SK-N-SH (cell line): ENCODE measurements at regions of chr2 and their contacts with region 1.

Region 1: GRCh38 chr2:230160112-230160660 is 59.6 kb downstream of the SP110 start:
- DNase-seq: peak; percentile 71
- H3K4me3 ChIP-seq: no peak overlapping the region
- H3K27ac ChIP-seq: no peak overlapping the region
- H3K4me1 ChIP-seq: peaks cover 0 to 3% of the 10 kb centered on the region in 2 experiments; a peak in 1 of 4 replicates
- H3K27me3 ChIP-seq: no peaks in the 10 kb centered on the region
- CTCF ChIP-seq: peak; percentile 83
- EP300 ChIP-seq: no peak
- RAD21 ChIP-seq: peak; percentile 72

Region 2: GRCh38 chr2:230007931-230008707 is 152.1 kb before region 1 on chr2:
- CTCF ChIA-PET with region 1: interaction called, 36 read pairs
- POLR2A ChIA-PET with region 1: no interaction called
- DNase-seq: peak; percentile 49
- H3K4me3 ChIP-seq: no peak overlapping the region; a peak in 1 of 4 replicates
- H3K27ac ChIP-seq: no peak overlapping the region
- H3K4me1 ChIP-seq: no peaks in the 10 kb centered on the region
- H3K27me3 ChIP-seq: no peaks in the 10 kb centered on the region
- CTCF ChIP-seq: peak; percentile 94
- EP300 ChIP-seq: no peak
- RAD21 ChIP-seq: peak; percentile 80

Region 3: DNA sequence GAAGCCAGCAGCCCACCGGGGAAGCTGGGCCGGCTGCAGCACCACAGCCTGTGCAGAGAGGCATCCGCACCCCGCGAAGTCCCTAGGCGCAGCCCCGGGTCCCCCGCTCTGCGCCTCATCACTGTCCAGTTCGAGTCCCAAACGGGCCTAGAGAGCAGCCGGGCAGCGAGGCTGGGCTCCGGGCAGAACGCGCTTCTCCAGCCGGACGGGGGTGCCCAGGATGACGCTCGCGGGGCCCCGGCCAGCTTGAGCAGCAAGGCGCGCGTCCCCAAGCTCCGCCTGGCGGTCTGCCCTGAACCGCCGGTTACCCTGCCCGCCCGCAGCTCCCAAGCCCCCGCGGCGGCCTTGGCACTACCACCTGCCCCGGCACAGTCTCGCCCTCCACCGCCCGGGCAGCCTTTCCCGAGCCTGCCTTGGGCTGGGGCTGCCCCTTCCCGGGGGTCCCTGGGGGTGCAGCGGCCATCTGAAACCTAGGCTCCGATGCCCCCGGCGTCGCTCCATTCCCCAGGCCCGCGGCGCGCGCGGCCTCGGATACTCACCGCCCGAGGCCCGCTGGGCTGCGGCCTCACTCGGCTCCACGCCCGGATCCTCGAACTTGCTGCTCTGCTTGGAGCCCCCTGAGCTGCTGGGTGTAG is 92.1 kb before region 1 on chr2:
- CTCF ChIA-PET with region 1: interaction called, 16 read pairs
- POLR2A ChIA-PET with region 1: no interaction called
- DNase-seq: peak; percentile 82
- H3K4me3 ChIP-seq: peak overlapping the region; percentile 56 to 66
- H3K27ac ChIP-seq: no peak overlapping the region; a peak in 1 of 4 replicates
- H3K4me1 ChIP-seq: no peaks in the 10 kb centered on the region; a peak in 1 of 4 replicates
- H3K27me3 ChIP-seq: no peaks in the 10 kb centered on the region
- CTCF ChIP-seq: peak; percentile 21
- EP300 ChIP-seq: no peak
- RAD21 ChIP-seq: no peak

Region 4: GRCh38 chr2:230137902-230138566 is 22.2 kb before region 1 on chr2:
- CTCF ChIA-PET with region 1: interaction called, 10 read pairs
- POLR2A ChIA-PET with region 1: no interaction called
- DNase-seq: no peak
- H3K4me3 ChIP-seq: no peak overlapping the region
- H3K27ac ChIP-seq: no peak overlapping the region
- H3K4me1 ChIP-seq: no peaks in the 10 kb centered on the region
- H3K27me3 ChIP-seq: no peaks in the 10 kb centered on the region
- CTCF ChIP-seq: no peak
- EP300 ChIP-seq: no peak
- RAD21 ChIP-seq: no peak

Region 5: GRCh38 chr2:230144355-230144754 is 15.8 kb before region 1 on chr2:
- CTCF ChIA-PET with region 1: interaction called, 16 read pairs
- POLR2A ChIA-PET with region 1: no interaction called
- DNase-seq: no peak
- H3K4me3 ChIP-seq: no peak overlapping the region
- H3K27ac ChIP-seq: no peak overlapping the region
- H3K4me1 ChIP-seq: no peaks in the 10 kb centered on the region
- H3K27me3 ChIP-seq: no peaks in the 10 kb centered on the region
- CTCF ChIP-seq: no peak
- EP300 ChIP-seq: no peak
- RAD21 ChIP-seq: no peak

Region 6: GRCh38 chr2:230170532-230170931 is 10.3 kb after region 1 on chr2:
- CTCF ChIA-PET with region 1: interaction called, 28 read pairs
- POLR2A ChIA-PET with region 1: no interaction called
- DNase-seq: no peak
- H3K4me3 ChIP-seq: no peak overlapping the region
- H3K27ac ChIP-seq: no peak overlapping the region
- H3K4me1 ChIP-seq: no peaks in the 10 kb centered on the region
- H3K27me3 ChIP-seq: no peaks in the 10 kb centered on the region
- CTCF ChIP-seq: no peak
- EP300 ChIP-seq: no peak
- RAD21 ChIP-seq: no peak

Region 7: DNA sequence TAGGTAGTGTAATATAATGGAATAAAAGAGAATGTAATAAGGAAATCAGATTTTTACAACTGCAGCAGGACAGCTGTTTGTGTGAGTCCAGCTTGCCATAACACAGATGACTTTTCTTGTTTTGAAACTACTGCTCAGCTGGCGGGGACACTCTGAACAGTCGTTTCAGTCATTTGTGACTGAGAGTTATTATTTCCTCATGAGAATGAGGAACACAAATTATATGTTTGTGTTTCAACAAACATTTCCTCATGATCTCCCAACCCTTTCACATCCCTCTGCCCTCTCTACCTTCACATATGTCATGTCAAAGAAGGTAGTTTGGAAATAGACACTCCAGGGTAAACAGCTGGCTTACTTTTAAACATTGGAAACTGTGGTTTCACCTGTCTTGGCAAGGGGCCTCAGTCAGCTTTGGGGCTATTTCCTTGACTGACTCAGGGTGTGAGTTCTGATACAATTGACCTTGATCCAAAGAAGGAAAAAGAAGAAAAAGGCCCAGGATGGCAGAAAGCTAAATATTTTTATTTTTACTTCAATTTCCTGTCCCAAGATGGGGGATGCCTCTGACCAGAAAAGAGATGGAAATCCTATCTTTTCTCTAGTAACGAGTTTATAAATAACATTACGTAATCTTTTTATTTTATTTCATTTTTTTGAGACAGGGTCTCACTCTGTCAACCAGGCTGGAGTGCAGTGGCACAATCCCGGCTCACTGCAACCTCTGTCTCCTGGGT is 167.4 kb after region 1 on chr2:
- CTCF ChIA-PET with region 1: no interaction called
- POLR2A ChIA-PET with region 1: no interaction called
- DNase-seq: no peak
- H3K4me3 ChIP-seq: peak overlapping the region; percentile 53 to 73
- H3K27ac ChIP-seq: peak overlapping the region; percentile 25 to 85; a peak in 3 of 4 replicates
- H3K4me1 ChIP-seq: peaks cover 0 to 8% of the 10 kb centered on the region in 2 experiments; a peak in 2 of 4 replicates
- H3K27me3 ChIP-seq: no peaks in the 10 kb centered on the region
- CTCF ChIP-seq: no peak
- EP300 ChIP-seq: no peak
- RAD21 ChIP-seq: no peak